Esophagus muscularis mucosa (tissue), 4 donors: ENCODE measurements at regions of chr1 and their contacts with region 1.

Region 1: DNA sequence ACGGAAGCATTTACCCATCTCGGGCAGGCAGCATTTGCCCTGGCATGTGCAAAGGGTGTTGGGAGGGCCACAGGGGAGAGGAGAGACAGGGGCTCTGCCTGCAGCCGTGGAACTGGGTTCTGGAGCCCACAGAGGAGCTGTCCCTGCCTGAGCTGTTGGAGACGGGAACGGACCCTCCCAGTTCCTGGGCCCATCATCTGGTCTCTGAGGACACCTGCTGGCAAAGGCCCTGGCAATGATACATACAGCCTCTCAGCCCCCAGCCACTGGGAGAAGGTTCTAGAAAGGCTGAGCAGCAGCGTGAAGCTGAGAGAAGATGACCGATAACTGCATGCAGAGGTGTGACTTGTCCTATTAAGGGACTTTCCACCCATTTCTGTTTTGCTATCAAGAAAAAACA is 31.4 kb downstream of the FAAP20 start:
- DNase-seq: no peak
- H3K4me3 ChIP-seq: no peak overlapping the region
- H3K27ac ChIP-seq: no peak overlapping the region
- H3K4me1 ChIP-seq: no peaks in the 10 kb centered on the region
- H3K27me3 ChIP-seq: peaks cover 0 to 9% (median 0%) of the 10 kb centered on the region in 4 donors
- CTCF ChIP-seq: no peak
- EP300 ChIP-seq: no peak
- POLR2A ChIP-seq: no peak

Region 2: GRCh38 chr1:2108213-2108876 is 54.9 kb before region 1 on chr1:
- intact Hi-C with region 1: loop called (anchors 5 kb)
- DNase-seq: no peak
- H3K4me3 ChIP-seq: no peak overlapping the region
- H3K27ac ChIP-seq: no peak overlapping the region
- H3K4me1 ChIP-seq: no peaks in the 10 kb centered on the region
- H3K27me3 ChIP-seq: peaks cover 0 to 50% (median 0%) of the 10 kb centered on the region in 4 donors
- CTCF ChIP-seq: peak in 2 of 3 experiments; percentile 22 to 26
- EP300 ChIP-seq: no peak
- POLR2A ChIP-seq: no peak